SK-N-SH (cell line): ENCODE measurements at regions of chr19 and their contacts with region 1.

Region 1: GRCh38 chr19:5953680-5954213 is 24.2 kb downstream of the RANBP3 start:
- DNase-seq: no peak
- H3K4me3 ChIP-seq: no peak overlapping the region
- H3K27ac ChIP-seq: peak overlapping the region; percentile 53 to 96; a peak in 3 of 4 replicates
- H3K4me1 ChIP-seq: peaks cover 31 to 78% of the 10 kb centered on the region in 2 experiments
- H3K27me3 ChIP-seq: no peaks in the 10 kb centered on the region
- CTCF ChIP-seq: no peak
- EP300 ChIP-seq: no peak
- RAD21 ChIP-seq: no peak

Region 2: DNA sequence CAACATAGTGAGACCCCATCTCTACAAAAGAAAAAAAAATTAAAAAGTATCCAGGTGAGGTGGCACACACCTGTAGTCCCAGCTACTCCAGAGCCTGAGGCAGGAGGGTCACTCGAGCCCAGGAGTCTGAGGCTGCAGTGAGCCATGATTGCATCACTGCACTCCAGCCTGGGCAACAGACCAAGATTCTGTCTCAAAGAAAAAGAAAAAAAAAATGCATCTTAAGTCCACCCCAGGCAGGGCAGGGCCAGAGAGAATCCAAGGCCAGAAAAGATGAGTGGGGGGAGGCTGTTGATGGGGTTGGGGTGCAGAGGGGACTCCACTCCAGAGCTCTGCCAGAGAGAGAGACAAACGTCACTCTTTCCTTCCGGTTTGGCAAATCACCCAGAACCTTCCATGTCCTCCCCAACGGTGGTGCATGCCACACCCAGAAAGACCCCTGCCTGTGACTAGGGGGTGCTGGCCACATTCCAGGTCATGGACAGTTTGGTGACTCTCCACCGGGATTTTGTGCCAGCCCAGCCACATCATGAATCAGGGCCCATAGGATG is 102.9 kb before region 1 on chr19:
- CTCF ChIA-PET with region 1: no interaction called
- POLR2A ChIA-PET with region 1: no interaction called
- DNase-seq: peak; percentile 9
- H3K4me3 ChIP-seq: no peak overlapping the region
- H3K27ac ChIP-seq: no peak overlapping the region
- H3K4me1 ChIP-seq: no peaks in the 10 kb centered on the region
- H3K27me3 ChIP-seq: peaks cover 17% of the 10 kb centered on the region
- CTCF ChIP-seq: no peak
- EP300 ChIP-seq: no peak
- RAD21 ChIP-seq: no peak

Region 3: GRCh38 chr19:5926641-5927440 is 26.9 kb before region 1 on chr19:
- CTCF ChIA-PET with region 1: no interaction called
- POLR2A ChIA-PET with region 1: no interaction called
- DNase-seq: peak; percentile 83
- H3K4me3 ChIP-seq: no peak overlapping the region
- H3K27ac ChIP-seq: peak overlapping the region in 1 of 2 experiments; percentile 96; a peak in 2 of 4 replicates
- H3K4me1 ChIP-seq: peaks cover 0 to 45% of the 10 kb centered on the region in 2 experiments; a peak in 2 of 4 replicates
- H3K27me3 ChIP-seq: no peaks in the 10 kb centered on the region
- CTCF ChIP-seq: no peak
- EP300 ChIP-seq: peak in 1 of 2 experiments; percentile 52; a peak in 1 of 4 replicates
- RAD21 ChIP-seq: no peak; the same call in 1 of the 2 replicates

Region 4: GRCh38 chr19:5943623-5944022 is 10.1 kb before region 1 on chr19:
- CTCF ChIA-PET with region 1: interaction called, 10 read pairs
- POLR2A ChIA-PET with region 1: interaction called, 3 read pairs
- DNase-seq: no peak
- H3K4me3 ChIP-seq: no peak overlapping the region
- H3K27ac ChIP-seq: no peak overlapping the region
- H3K4me1 ChIP-seq: peaks cover 0 to 19% of the 10 kb centered on the region in 2 experiments; a peak in 1 of 4 replicates
- H3K27me3 ChIP-seq: no peaks in the 10 kb centered on the region
- CTCF ChIP-seq: no peak
- EP300 ChIP-seq: no peak
- RAD21 ChIP-seq: no peak